ENCODE measurements at regions of chr1 and their contacts with region 1.

Region 1: GRCh38 chr1:44423591-44424537 is 18.8 kb downstream of the RNF220 start:
- DNase-seq: peak; percentile 81
- H3K4me3 ChIP-seq: peak overlapping the region in 2 of 3 experiments; percentile 19 to 31
- H3K27ac ChIP-seq: no peak overlapping the region
- H3K4me1 ChIP-seq: peaks cover 24% of the 10 kb centered on the region
- H3K27me3 ChIP-seq: peaks cover 9% of the 10 kb centered on the region
- CTCF ChIP-seq: no peak

Region 2: GRCh38 chr1:44305962-44306422 is 117.9 kb before region 1 on chr1:
- CTCF ChIA-PET with region 1: no interaction called
- dilution Hi-C with region 1: no loop called
- in situ Hi-C with region 1: no loop called
- intact Hi-C with region 1: no loop called
- DNase-seq: no peak
- H3K4me3 ChIP-seq: no peak overlapping the region
- H3K27ac ChIP-seq: no peak overlapping the region
- H3K4me1 ChIP-seq: no peaks in the 10 kb centered on the region
- H3K27me3 ChIP-seq: no peaks in the 10 kb centered on the region
- CTCF ChIP-seq: no peak

Region 3: GRCh38 chr1:44472620-44473525 is 49.0 kb after region 1 on chr1:
- CTCF ChIA-PET with region 1: no interaction called
- dilution Hi-C with region 1: loop called (anchors 10 kb)
- in situ Hi-C with region 1: no loop called
- intact Hi-C with region 1: no loop called
- DNase-seq: no peak
- H3K4me3 ChIP-seq: no peak overlapping the region
- H3K27ac ChIP-seq: no peak overlapping the region
- H3K4me1 ChIP-seq: no peaks in the 10 kb centered on the region
- H3K27me3 ChIP-seq: peaks cover 3% of the 10 kb centered on the region
- CTCF ChIP-seq: no peak

Region 4: GRCh38 chr1:44519035-44519676 is 95.3 kb after region 1 on chr1:
- CTCF ChIA-PET with region 1: no interaction called
- dilution Hi-C with region 1: loop called (anchors 5 kb)
- in situ Hi-C with region 1: no loop called
- intact Hi-C with region 1: no loop called
- DNase-seq: no peak
- H3K4me3 ChIP-seq: no peak overlapping the region
- H3K27ac ChIP-seq: no peak overlapping the region
- H3K4me1 ChIP-seq: peaks cover 18% of the 10 kb centered on the region
- H3K27me3 ChIP-seq: no peaks in the 10 kb centered on the region
- CTCF ChIP-seq: no peak